Activated CD4-positive, alpha-beta T cell treated with anti-CD3 and anti-CD28 coated beads for 36 hours (primary cell): ENCODE measurements at regions of chr7 and their contacts with region 1.

Region 1: DNA sequence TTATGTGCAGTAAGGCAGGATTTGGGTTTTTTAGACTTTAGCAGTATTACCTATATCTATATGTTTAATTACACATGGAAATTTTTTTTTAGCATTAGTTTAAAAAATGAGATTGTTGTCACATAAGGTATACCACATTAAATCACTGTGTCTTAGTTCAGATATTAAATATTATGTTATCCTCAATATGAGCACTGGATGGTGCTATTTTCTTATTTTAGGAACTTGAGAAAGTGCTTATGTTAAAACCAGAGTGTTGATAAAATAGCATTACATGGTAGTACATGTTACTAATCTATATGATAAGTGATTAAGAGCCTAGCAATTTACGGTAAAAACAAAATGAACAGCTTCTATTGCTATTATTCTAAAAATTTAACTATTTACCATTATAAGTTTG is 28.8 kb downstream of the MIOS start:
- DNase-seq: no peak
- ATAC-seq: no peak
- H3K4me3 Mint-ChIP-seq: no peak overlapping the region
- H3K27ac Mint-ChIP-seq: no peak overlapping the region
- H3K4me1 Mint-ChIP-seq: no peaks in the 10 kb centered on the region
- H3K27me3 Mint-ChIP-seq: no peaks in the 10 kb centered on the region

Region 2: DNA sequence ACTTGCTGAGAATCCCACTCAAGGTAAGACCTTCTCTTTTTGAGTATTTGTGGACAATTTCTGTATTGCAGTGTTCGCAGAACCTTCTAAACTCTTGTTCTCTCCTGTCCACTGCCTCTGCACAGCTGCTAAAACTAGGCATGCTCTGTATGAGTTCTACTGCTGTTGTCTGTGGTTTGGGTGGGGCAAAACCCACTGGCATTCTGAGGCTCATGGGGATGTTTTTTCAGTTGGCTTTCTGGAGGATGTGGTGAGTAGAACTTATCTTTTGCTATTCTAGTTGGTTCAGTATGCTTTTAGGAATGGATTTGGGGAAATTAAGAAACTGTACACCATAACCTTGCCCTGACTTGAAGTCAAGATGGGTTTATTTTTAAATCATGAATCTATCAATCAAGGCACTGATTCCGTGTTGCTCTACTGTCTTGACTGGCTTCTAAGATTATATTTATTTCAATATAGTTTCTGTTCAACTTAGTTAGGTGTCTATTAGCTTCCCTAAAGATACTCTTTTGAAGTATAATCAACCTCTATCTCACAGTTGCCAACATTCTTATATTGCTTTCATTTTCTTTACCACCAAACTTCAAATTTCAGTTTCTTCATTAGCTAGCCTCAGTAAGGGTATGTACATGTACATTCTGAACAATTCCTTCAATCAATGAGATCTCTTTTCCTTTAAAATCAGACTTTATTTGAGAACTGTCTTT is 438.1 kb before region 1 on chr7:
- CTCF ChIA-PET with region 1: no interaction called
- POLR2A ChIA-PET with region 1: no interaction called
- intact Hi-C with region 1: no loop called
- DNase-seq: peak; percentile 65
- ATAC-seq: peak; percentile 86
- H3K4me3 Mint-ChIP-seq: peak overlapping the region; percentile 57
- H3K27ac Mint-ChIP-seq: peak overlapping the region; percentile 74
- H3K4me1 Mint-ChIP-seq: peaks cover 49% of the 10 kb centered on the region
- H3K27me3 Mint-ChIP-seq: no peaks in the 10 kb centered on the region

Region 3: DNA sequence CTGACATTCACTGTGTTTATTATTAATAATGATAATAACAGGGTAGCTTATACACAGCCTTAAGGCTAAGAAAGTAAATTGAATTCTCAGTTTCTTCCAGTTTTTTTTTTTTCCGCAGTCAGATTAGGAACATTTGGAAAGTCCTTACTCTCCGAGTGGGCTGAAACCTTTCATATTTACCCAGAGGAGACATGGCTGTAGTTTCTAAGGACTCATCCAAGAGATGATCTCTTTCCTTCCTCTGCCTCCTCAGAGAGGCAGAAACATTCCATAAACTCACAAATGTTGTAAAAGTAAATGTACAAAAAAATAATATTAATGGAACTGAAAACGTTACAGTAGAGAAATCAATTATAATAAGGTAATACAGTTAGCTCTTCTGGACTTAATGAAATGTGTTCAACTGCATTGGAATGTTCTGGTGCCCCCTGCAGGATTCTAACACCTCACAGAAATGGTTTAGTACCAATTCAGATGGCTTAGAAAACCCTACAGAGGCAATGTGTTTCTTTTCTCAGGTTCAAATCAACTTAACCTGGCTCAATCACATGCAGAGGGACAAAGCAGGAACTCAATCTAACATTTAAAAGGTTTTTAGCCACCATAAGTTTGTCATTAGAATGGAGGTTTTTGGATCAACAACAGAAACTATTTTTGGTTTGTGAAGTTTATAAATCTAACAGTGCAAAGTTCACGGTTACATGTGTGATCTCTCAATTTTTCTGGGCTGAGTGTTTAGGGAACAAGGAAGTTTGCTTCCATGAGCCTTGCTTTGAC is 594.9 kb after region 1 on chr7:
- CTCF ChIA-PET with region 1: interaction called, 4 read pairs
- POLR2A ChIA-PET with region 1: no interaction called
- intact Hi-C with region 1: loop called in 1 of 2 experiments (anchors 2 kb)
- DNase-seq: peak; percentile 73
- ATAC-seq: peak; percentile 86
- H3K4me3 Mint-ChIP-seq: no peak overlapping the region
- H3K27ac Mint-ChIP-seq: no peak overlapping the region
- H3K4me1 Mint-ChIP-seq: peaks cover 8% of the 10 kb centered on the region
- H3K27me3 Mint-ChIP-seq: no peaks in the 10 kb centered on the region

Region 4: DNA sequence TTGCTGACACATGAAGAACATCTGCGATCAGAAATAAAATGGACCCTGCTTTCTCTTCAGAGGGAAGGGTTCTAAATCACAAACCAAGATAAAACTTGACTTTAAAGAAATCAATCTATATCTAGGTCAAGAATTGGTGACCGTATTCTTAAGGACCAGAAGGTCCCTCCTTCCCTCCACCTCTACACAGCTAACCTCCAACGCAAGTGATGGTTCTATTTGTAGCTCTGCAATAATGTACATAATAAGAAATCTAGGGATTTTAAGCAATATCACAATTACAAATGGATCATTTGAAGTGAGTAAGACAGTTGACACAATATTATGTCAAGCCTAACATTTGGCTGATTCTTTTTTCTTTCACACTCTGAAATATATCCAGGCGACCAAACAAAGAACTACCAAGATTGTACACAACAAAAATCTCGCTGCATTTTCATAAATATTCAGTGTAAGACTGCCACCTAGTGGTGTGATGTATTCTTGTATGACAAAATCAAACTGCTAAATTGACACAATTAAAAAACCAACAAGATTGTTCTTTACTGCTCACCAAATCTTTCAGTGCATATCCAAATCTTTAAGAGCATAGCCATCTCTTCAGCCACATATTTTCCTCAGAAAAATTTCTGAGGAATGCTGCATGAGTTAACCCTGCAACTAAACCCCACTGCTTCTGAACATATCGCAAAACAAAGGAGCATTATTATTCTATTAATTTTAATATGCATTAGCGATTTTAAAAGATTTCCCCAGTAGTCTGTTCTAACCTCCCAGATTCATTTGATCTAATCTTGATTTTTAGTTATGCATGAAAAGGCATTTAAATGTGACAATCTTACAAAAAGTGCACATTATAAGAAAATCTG is 622.0 kb after region 1 on chr7:
- CTCF ChIA-PET with region 1: interaction called, 4 read pairs
- POLR2A ChIA-PET with region 1: no interaction called
- intact Hi-C with region 1: loop called (anchors 1 to 2 kb)
- DNase-seq: no peak
- ATAC-seq: peak; percentile 49
- H3K4me3 Mint-ChIP-seq: no peak overlapping the region
- H3K27ac Mint-ChIP-seq: no peak overlapping the region
- H3K4me1 Mint-ChIP-seq: peaks cover 2% of the 10 kb centered on the region
- H3K27me3 Mint-ChIP-seq: no peaks in the 10 kb centered on the region